IMR-90 (cell line): ENCODE measurements at regions of chr11 and their contacts with region 1.

Region 1: GRCh38 chr11:76721755-76722677 is 51.5 kb upstream of the LRRC32 start:
- DNase-seq: peak; percentile 73
- ATAC-seq: peak; percentile 99
- H3K4me3 ChIP-seq: no peak overlapping the region
- H3K27ac ChIP-seq: no peak overlapping the region
- H3K4me1 ChIP-seq: no peaks in the 10 kb centered on the region
- H3K27me3 ChIP-seq: peaks cover 44% of the 10 kb centered on the region
- CTCF ChIP-seq: peak; percentile 84
- POLR2A ChIP-seq: no peak
- RAD21 ChIP-seq: peak; percentile 75

Region 2: DNA sequence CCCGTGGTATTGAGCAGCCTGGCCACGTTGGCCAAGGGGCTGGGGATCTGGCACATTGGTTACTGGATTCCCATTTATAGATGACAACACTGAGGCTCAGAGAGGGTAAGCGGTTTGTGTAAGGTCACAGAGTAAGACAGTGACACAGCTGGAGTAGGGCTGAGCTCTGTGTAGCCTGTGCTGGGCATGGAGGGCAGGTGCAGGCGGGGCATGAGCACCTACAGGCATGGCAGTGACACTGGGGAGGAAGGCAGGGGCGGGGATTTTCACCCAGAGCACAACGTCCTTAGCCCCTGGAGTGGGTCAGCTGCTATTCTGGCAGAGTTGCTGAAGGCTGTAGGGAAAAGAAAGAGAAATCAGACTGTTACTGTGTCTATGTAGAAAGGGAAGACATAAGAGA is 11.3 kb before region 1 on chr11:
- CTCF ChIA-PET with region 1: interaction called, 6 read pairs
- POLR2A ChIA-PET with region 1: interaction called, 14 read pairs
- dilution Hi-C with region 1: no loop called
- in situ Hi-C with region 1: no loop called
- intact Hi-C with region 1: no loop called
- DNase-seq: no peak
- ATAC-seq: no peak
- H3K4me3 ChIP-seq: no peak overlapping the region
- H3K27ac ChIP-seq: no peak overlapping the region
- H3K4me1 ChIP-seq: no peaks in the 10 kb centered on the region
- H3K27me3 ChIP-seq: peaks cover 30% of the 10 kb centered on the region
- CTCF ChIP-seq: no peak
- POLR2A ChIP-seq: no peak
- RAD21 ChIP-seq: no peak

Region 3: GRCh38 chr11:76791861-76792260 is 69.8 kb after region 1 on chr11:
- CTCF ChIA-PET with region 1: no interaction called
- POLR2A ChIA-PET with region 1: no interaction called
- dilution Hi-C with region 1: no loop called
- in situ Hi-C with region 1: no loop called
- intact Hi-C with region 1: no loop called
- DNase-seq: peak; percentile 78
- ATAC-seq: peak; percentile 51
- H3K4me3 ChIP-seq: no peak overlapping the region
- H3K27ac ChIP-seq: no peak overlapping the region
- H3K4me1 ChIP-seq: peaks cover 8% of the 10 kb centered on the region; the same call in 1 of the 2 replicates
- H3K27me3 ChIP-seq: no peaks in the 10 kb centered on the region
- CTCF ChIP-seq: no peak
- POLR2A ChIP-seq: no peak
- RAD21 ChIP-seq: no peak